Natural killer cell (primary cell): ENCODE measurements at regions of chr16 and their contacts with region 1.

Region 1: DNA sequence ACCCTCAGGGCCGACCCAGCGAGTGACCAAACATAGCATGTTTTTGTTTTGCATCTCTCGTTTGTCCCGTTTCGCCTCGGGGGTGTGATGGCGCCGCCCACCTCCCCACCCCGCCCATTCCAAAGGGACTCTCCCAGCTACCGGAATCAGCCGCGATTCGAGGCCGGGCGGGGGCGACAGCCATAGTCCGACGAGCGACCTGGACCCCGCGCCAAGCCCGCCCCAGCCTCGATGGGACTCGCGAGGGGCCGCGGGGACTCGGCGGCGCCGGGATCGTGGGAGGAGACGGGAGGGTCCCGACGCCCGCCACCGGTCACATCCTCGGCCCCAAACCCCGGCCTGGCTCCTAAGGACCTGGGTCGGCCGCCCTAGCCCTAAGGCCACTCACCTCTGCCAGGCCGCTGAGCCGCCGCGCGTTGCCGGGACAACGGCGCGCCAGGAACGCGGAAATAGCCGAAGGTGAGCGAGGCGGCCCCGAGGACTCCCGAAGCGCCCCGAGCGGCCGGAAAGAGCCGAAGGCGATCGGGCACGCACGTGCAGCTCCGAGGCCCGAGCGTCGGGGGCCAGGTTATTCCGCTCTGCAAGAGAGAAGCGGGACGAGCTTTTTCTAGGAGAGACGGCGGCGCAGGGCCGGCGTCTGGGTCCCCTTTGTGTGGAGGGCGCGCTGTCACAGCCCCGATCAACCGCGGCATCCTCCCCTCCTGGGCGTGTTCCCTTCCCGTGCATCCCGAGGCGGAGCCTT is 1.4 kb downstream of the IFT140 start:
- DNase-seq: peak; percentile 95 to 96
- ATAC-seq: peak; percentile 57 to 58 (median 58)
- H3K4me3 ChIP-seq: peak overlapping the region; percentile 34
- H3K4me3 Mint-ChIP-seq: peak overlapping the region; percentile 74
- H3K27ac ChIP-seq: peak overlapping the region; percentile 71
- H3K27ac Mint-ChIP-seq: peak overlapping the region; percentile 85 to 91
- H3K4me1 ChIP-seq: peaks cover 40% of the 10 kb centered on the region
- H3K4me1 Mint-ChIP-seq: peaks cover 23 to 34% of the 10 kb centered on the region in 2 donors
- H3K27me3 ChIP-seq: no peaks in the 10 kb centered on the region
- H3K27me3 Mint-ChIP-seq: peaks cover 0 to 5% of the 10 kb centered on the region in 2 donors
- CTCF ChIP-seq: no peak

Region 2: GRCh38 chr16:1420111-1420540 is 190.3 kb before region 1 on chr16:
- intact Hi-C with region 1: loop called (anchors 2 kb)
- DNase-seq: no peak
- ATAC-seq: no peak
- H3K4me3 ChIP-seq: peak overlapping the region; percentile 83
- H3K4me3 Mint-ChIP-seq: peak overlapping the region; percentile 99
- H3K27ac ChIP-seq: peak overlapping the region; percentile 99
- H3K27ac Mint-ChIP-seq: peak overlapping the region; percentile 96 to 97
- H3K4me1 ChIP-seq: peaks cover 25% of the 10 kb centered on the region
- H3K4me1 Mint-ChIP-seq: peaks cover 0 to 16% of the 10 kb centered on the region in 2 donors
- H3K27me3 ChIP-seq: no peaks in the 10 kb centered on the region
- H3K27me3 Mint-ChIP-seq: no peaks in the 10 kb centered on the region
- CTCF ChIP-seq: no peak

Region 3: GRCh38 chr16:1474796-1475551 is 135.5 kb before region 1 on chr16 and contains the start of gene CLCN7:
- intact Hi-C with region 1: loop called (anchors 2 kb)
- DNase-seq: peak; percentile 92 to 93
- ATAC-seq: peak; percentile 85 to 96 (median 91)
- H3K4me3 ChIP-seq: peak within 1 kb of the TSS; percentile 58
- H3K4me3 Mint-ChIP-seq: peak within 1 kb of the TSS; percentile 80
- H3K27ac ChIP-seq: peak within 1 kb of the TSS; percentile 78
- H3K27ac Mint-ChIP-seq: peak within 1 kb of the TSS; percentile 67 to 86
- H3K4me1 ChIP-seq: peaks cover 40% of the 10 kb centered on the region
- H3K4me1 Mint-ChIP-seq: peaks cover 9 to 34% of the 10 kb centered on the region in 2 donors
- H3K27me3 ChIP-seq: no peaks in the 10 kb centered on the region
- H3K27me3 Mint-ChIP-seq: no peaks in the 10 kb centered on the region
- CTCF ChIP-seq: no peak
- total RNA-seq, gene CLCN7: 117 to 125 (median 118) TPM

Region 4: GRCh38 chr16:1556254-1556653 is 54.2 kb before region 1 on chr16:
- intact Hi-C with region 1: no loop called
- DNase-seq: no peak
- ATAC-seq: no peak
- H3K4me3 ChIP-seq: no peak overlapping the region
- H3K4me3 Mint-ChIP-seq: no peak overlapping the region
- H3K27ac ChIP-seq: no peak overlapping the region
- H3K27ac Mint-ChIP-seq: no peak overlapping the region
- H3K4me1 ChIP-seq: no peaks in the 10 kb centered on the region
- H3K4me1 Mint-ChIP-seq: peaks cover 0 to 10% of the 10 kb centered on the region in 2 donors
- H3K27me3 ChIP-seq: no peaks in the 10 kb centered on the region
- H3K27me3 Mint-ChIP-seq: no peaks in the 10 kb centered on the region
- CTCF ChIP-seq: no peak

Region 5: DNA sequence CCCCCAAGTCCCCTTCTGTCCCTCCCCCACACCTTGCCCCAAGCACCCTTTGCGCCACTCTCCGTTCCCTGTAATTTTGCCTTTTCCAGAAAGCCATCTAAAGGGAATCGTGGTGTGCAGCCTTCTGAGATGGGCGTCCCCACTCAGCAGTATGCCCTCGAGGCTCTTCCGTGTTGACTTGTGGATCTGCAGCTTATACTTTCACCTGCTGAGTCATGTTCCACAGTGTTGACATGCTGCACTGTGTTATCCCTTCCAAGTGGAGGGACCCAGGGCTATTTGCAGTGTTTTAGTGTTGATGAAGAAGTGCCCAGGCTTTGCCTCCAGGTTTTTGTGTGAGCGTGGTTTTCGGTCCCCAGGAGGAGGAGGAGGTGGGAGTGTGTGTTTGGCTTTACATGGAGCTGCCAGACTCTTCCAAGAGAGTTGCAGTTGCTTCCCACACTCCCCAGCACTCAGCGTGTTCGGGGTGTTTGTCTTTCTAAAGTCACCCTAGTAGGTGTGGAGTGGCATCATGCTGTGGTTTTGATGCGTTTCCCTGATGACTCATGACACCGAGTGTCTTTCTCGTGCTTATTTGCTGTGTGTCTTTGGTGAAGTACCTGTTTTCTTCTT is 35.6 kb after region 1 on chr16:
- intact Hi-C with region 1: loop called (anchors 1 kb)
- DNase-seq: peak; percentile 37 to 44
- ATAC-seq: peak; percentile 79 to 89 (median 86)
- H3K4me3 ChIP-seq: no peak overlapping the region
- H3K4me3 Mint-ChIP-seq: peak overlapping the region; percentile 68
- H3K27ac ChIP-seq: peak overlapping the region; percentile 70
- H3K27ac Mint-ChIP-seq: peak overlapping the region; percentile 90 to 96
- H3K4me1 ChIP-seq: peaks cover 16% of the 10 kb centered on the region
- H3K4me1 Mint-ChIP-seq: peaks cover 45 to 57% of the 10 kb centered on the region in 2 donors
- H3K27me3 ChIP-seq: no peaks in the 10 kb centered on the region
- H3K27me3 Mint-ChIP-seq: no peaks in the 10 kb centered on the region
- CTCF ChIP-seq: no peak

Region 6: DNA sequence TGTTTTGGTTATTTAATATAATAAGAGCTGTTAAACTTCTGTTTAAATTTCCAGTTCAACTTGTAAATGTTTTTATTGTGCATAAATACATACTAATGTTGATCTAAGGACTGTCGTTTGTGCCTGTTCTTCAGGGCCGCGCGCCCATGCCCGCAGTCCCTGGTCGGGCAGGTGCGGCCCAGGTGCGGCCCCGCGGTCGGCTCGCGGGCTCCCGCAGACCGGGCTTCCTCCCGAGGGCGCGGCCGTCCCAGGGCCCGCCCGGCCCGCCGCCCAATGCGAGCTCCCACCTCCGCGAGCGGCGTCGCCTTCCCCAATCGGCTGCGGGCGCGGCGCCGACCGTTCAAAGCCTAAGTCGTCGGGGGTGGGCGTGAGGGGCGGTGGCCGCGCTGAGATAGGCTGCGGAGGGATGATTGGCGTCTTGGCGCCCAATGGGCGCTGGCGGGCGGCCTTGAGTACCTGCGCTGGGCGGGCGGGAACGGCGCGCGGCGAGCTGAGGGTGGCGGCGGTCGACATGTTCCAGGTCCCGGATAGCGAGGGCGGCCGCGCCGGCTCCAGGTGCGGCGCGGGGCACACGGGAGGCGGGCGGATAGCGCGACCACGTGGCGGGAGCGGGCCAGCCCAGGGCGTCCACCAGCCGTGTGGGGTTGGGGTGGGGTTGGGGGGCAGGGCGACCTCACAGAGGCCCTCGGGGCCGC is 67.5 kb after region 1 on chr16 and contains the start of gene JPT2:
- intact Hi-C with region 1: loop called (anchors 10 kb)
- DNase-seq: peak; percentile 89 to 97
- ATAC-seq: peak; percentile 97
- H3K4me3 ChIP-seq: peak within 1 kb of the TSS; percentile 51
- H3K4me3 Mint-ChIP-seq: peak within 1 kb of the TSS; percentile 86
- H3K27ac ChIP-seq: no peak within 1 kb of the TSS
- H3K27ac Mint-ChIP-seq: peak within 1 kb of the TSS; percentile 73 to 80
- H3K4me1 ChIP-seq: peaks cover 14% of the 10 kb centered on the region
- H3K4me1 Mint-ChIP-seq: peaks cover 26% of the 10 kb centered on the region in 2 donors
- H3K27me3 ChIP-seq: no peaks in the 10 kb centered on the region
- H3K27me3 Mint-ChIP-seq: no peaks in the 10 kb centered on the region
- CTCF ChIP-seq: no peak
- total RNA-seq, gene JPT2: 12.2 to 28.4 (median 14.2) TPM

Region 7: GRCh38 chr16:1705688-1706385 is 95.4 kb after region 1 on chr16 and contains the start of gene MAPK8IP3:
- intact Hi-C with region 1: loop called (anchors 5 kb)
- DNase-seq: peak; percentile 97 to 100
- ATAC-seq: peak; percentile 81 to 95 (median 86)
- H3K4me3 ChIP-seq: peak within 1 kb of the TSS; percentile 83
- H3K4me3 Mint-ChIP-seq: peak within 1 kb of the TSS; percentile 100
- H3K27ac ChIP-seq: peak within 1 kb of the TSS; percentile 73
- H3K27ac Mint-ChIP-seq: peak within 1 kb of the TSS; percentile 98 to 99
- H3K4me1 ChIP-seq: peaks cover 39% of the 10 kb centered on the region
- H3K4me1 Mint-ChIP-seq: peaks cover 22 to 33% of the 10 kb centered on the region in 2 donors
- H3K27me3 ChIP-seq: no peaks in the 10 kb centered on the region
- H3K27me3 Mint-ChIP-seq: peaks cover 0 to 3% of the 10 kb centered on the region in 2 donors
- CTCF ChIP-seq: peak; percentile 93
- total RNA-seq, gene MAPK8IP3: 272 to 291 (median 285) TPM